ENCODE measurements at regions of chr5 and their contacts with region 1.

Region 1: DNA sequence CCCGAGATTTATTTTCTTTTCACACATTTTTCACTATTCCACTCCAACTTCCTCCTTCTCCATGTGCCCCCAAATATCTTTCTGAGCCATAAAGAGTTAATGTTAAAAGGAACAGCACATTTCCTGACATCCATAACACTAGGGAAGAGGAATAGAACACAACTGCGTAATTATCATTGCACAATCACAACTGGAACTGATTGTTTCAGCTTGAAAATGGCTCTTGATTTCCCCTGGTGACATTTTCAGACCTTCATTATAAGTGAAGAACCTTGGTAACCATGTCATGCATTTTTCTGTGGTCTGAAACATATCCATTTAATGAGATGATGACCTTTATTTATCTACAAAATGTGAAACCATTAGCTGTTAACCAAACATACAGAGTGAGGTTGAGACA is 82.4 kb downstream of the PCSK1 start:
- DNase-seq: no peak
- H3K4me3 ChIP-seq: no peak overlapping the region
- H3K27ac ChIP-seq: no peak overlapping the region
- H3K4me1 ChIP-seq: no peaks in the 10 kb centered on the region
- H3K27me3 ChIP-seq: no peaks in the 10 kb centered on the region
- CTCF ChIP-seq: peak in 1 of 3 experiments; percentile 3
- POLR2A ChIP-seq: no peak

Region 2: GRCh38 chr5:96595300-96596090 is 244.8 kb after region 1 on chr5:
- intact Hi-C with region 1: loop called (anchors 5 kb)
- DNase-seq: no peak
- H3K4me3 ChIP-seq: no peak overlapping the region
- H3K27ac ChIP-seq: no peak overlapping the region
- H3K4me1 ChIP-seq: no peaks in the 10 kb centered on the region
- H3K27me3 ChIP-seq: no peaks in the 10 kb centered on the region
- CTCF ChIP-seq: peak in 1 of 3 experiments; percentile 46
- POLR2A ChIP-seq: no peak

Measured in testis (tissue), 5 donors.